GM12878 (cell line): ENCODE measurements at regions of chr10 and their contacts with region 1.

Region 1: DNA sequence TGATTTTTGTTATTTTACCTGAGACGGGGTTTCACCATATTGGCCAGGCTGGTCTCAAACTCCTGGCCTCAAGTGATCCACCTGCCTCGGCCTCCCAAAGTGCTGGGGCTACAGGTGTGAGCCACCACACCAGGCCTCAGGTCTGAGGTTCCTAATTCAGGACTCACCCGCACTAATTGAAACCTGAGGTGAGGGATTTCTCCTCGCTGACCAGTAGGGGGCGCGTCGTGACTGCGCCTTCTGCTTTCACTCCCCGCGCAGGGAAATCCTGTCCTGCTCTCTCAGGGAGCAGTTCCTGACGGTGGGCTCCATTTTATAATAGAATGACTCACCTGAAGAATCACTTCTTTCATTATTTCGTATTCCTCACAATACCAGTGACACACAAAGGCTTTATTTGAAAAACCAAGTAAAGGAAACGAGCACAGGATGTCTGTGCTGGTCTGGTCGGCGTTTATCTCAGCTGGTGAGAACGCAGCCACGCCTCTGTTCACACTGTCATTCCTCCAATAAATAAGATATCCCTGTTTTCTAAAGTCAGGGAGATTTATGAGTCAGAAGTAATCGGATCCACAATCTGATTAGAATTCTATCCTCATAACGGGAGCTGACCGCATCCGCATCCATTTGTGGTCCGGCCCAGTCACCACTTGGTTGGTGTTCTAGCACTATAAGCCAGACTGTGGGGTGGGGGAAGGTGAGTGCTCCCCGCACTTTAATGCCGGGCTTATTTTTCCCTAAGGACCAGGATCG is 35.4 kb downstream of the BAG3 start:
- DNase-seq: no peak
- ATAC-seq: peak; percentile 87
- H3K4me3 ChIP-seq: no peak overlapping the region
- H3K27ac ChIP-seq: no peak overlapping the region
- H3K4me1 ChIP-seq: no peaks in the 10 kb centered on the region
- H3K27me3 ChIP-seq: no peaks in the 10 kb centered on the region
- CTCF ChIP-seq: peak; percentile 84 to 92 (median 86)
- EP300 ChIP-seq: no peak
- POLR2A ChIP-seq: no peak
- RAD21 ChIP-seq: peak; percentile 96

Region 2: DNA sequence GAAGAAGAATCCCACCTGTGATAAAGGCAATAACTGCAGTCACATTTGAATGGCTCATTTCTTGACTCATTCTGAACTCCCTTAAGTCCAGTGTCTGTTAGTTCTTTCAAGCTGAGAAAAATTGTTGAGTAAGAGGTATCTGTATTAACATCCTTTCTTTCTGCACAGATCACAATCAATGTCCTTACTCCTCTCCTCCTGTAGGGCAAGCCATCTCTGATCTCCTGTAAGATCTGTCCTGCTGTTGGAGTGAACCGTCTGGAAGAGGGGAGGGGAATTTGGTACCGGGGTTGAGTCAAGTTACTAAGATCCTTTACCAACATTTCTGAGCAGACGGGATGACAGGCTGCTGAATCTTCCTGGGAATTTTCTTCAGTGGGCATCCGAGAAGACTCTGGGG is 124.5 kb before region 1 on chr10:
- CTCF ChIA-PET with region 1: no interaction called
- POLR2A ChIA-PET with region 1: no interaction called
- RAD21 ChIA-PET with region 1: no interaction called
- SMC1A ChIA-PET with region 1: no interaction called
- in situ Hi-C with region 1: no loop called
- intact Hi-C with region 1: no loop called
- DNase-seq: no peak
- ATAC-seq: no peak
- H3K4me3 ChIP-seq: no peak overlapping the region
- H3K27ac ChIP-seq: no peak overlapping the region
- H3K4me1 ChIP-seq: no peaks in the 10 kb centered on the region
- H3K27me3 ChIP-seq: no peaks in the 10 kb centered on the region
- CTCF ChIP-seq: no peak
- EP300 ChIP-seq: no peak
- POLR2A ChIP-seq: no peak
- RAD21 ChIP-seq: no peak

Region 3: GRCh38 chr10:119616882-119617570 is 69.6 kb before region 1 on chr10:
- CTCF ChIA-PET with region 1: no interaction called
- POLR2A ChIA-PET with region 1: no interaction called
- RAD21 ChIA-PET with region 1: no interaction called
- SMC1A ChIA-PET with region 1: no interaction called
- in situ Hi-C with region 1: no loop called
- intact Hi-C with region 1: no loop called
- DNase-seq: no peak
- ATAC-seq: peak; percentile 61
- H3K4me3 ChIP-seq: no peak overlapping the region
- H3K27ac ChIP-seq: no peak overlapping the region
- H3K4me1 ChIP-seq: no peaks in the 10 kb centered on the region
- H3K27me3 ChIP-seq: no peaks in the 10 kb centered on the region
- CTCF ChIP-seq: no peak; a peak in 1 of 6 replicates
- EP300 ChIP-seq: no peak
- POLR2A ChIP-seq: no peak
- RAD21 ChIP-seq: no peak

Region 4: GRCh38 chr10:119715628-119716505 is 29.3 kb after region 1 on chr10:
- CTCF ChIA-PET with region 1: interaction called, 13 read pairs
- POLR2A ChIA-PET with region 1: no interaction called
- RAD21 ChIA-PET with region 1: interaction called, 7 read pairs
- SMC1A ChIA-PET with region 1: interaction called, 12 read pairs
- in situ Hi-C with region 1: no loop called
- intact Hi-C with region 1: no loop called
- DNase-seq: no peak
- ATAC-seq: no peak
- H3K4me3 ChIP-seq: no peak overlapping the region
- H3K27ac ChIP-seq: no peak overlapping the region
- H3K4me1 ChIP-seq: no peaks in the 10 kb centered on the region
- H3K27me3 ChIP-seq: no peaks in the 10 kb centered on the region
- CTCF ChIP-seq: no peak
- EP300 ChIP-seq: no peak
- POLR2A ChIP-seq: no peak
- RAD21 ChIP-seq: no peak

Region 5: DNA sequence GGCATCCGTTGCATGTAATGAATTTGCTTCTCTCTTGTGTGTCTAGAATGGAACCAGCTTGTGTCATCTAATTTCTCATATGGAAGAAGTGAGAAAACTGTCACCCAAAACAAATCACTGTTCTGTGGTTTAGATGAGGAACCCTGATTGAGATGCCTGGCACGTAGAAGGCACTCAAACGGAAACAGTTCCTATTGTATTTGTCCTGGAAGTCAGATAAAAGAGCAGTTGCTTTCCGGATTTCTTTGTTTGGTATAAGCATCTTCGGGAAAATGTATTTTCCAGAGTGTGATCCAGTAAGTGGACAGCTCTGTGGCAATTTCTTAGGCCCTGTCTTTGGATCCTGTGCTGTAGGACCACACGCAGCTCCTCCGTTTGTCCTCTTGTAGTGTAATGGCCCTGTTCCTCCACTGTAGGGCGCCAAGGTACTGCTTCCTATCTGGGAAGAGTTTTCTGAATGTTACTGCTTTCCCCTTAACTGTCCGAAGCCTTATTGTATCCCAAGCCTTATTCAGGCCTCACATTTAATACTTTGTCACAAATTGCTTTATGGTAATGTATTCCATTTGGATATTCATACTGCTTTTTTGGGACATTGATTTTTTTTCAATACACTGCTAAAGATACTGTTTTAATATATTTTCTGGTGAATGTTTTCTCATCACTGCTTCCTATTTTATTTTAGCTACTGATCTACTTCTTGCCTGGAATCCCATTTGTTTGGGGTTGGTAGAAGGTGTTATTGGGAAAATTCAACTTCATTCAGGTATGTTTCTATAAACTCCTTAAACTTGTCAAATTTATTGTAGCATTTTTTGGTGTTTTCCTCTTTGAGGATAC is 64.0 kb after region 1 on chr10:
- CTCF ChIA-PET with region 1: interaction called, 225 read pairs
- POLR2A ChIA-PET with region 1: interaction called, 6 read pairs
- RAD21 ChIA-PET with region 1: interaction called, 60 read pairs
- SMC1A ChIA-PET with region 1: interaction called, 172 read pairs
- in situ Hi-C with region 1: no loop called
- intact Hi-C with region 1: loop called (anchors 1 kb)
- DNase-seq: peak; percentile 36
- ATAC-seq: peak; percentile 95
- H3K4me3 ChIP-seq: no peak overlapping the region
- H3K27ac ChIP-seq: no peak overlapping the region
- H3K4me1 ChIP-seq: no peaks in the 10 kb centered on the region
- H3K27me3 ChIP-seq: no peaks in the 10 kb centered on the region
- CTCF ChIP-seq: peak; percentile 93
- EP300 ChIP-seq: no peak; a peak in 1 of 4 replicates
- POLR2A ChIP-seq: no peak
- RAD21 ChIP-seq: peak; percentile 99

Region 6: DNA sequence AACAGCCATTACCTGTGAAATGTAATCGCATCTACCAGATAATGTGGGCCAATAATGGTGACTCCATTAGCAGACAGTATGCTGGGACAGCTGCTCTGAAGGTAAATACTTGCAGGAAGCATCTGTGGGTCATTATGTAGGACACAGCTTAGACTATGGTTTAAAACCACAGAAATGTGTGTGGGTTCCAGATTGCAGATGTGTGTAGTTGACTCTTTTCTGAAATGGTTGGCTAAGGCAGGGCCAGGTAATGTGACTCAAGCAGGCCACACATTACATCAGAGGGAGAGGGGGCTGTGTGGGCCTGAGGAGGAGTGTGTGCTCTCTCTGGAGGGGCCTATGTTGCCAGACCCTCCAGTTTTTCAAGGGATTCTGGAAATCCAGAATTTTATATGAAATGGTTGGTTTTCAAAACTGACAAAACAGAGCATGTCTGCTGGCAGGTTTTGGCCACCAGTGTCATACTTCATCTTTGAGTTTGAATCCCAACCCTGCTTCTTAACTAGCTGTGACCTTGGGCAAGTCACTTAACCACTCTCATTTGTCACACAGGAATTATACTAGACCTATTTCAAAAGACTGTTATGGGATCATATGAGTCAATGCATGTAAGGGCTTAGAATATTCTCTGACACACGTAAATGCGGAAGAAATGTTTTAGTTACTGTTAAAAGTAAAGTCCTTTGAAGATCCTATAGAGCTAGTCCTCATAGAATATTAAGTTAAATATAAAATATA is 121.5 kb after region 1 on chr10:
- CTCF ChIA-PET with region 1: interaction called, 13 read pairs
- POLR2A ChIA-PET with region 1: no interaction called
- RAD21 ChIA-PET with region 1: interaction called, 4 read pairs
- SMC1A ChIA-PET with region 1: interaction called, 12 read pairs
- in situ Hi-C with region 1: no loop called
- intact Hi-C with region 1: no loop called
- DNase-seq: no peak
- ATAC-seq: peak; percentile 93
- H3K4me3 ChIP-seq: no peak overlapping the region
- H3K27ac ChIP-seq: no peak overlapping the region
- H3K4me1 ChIP-seq: peaks cover 2% of the 10 kb centered on the region; the same call in 1 of the 2 replicates
- H3K27me3 ChIP-seq: no peaks in the 10 kb centered on the region
- CTCF ChIP-seq: no peak
- EP300 ChIP-seq: no peak
- POLR2A ChIP-seq: no peak
- RAD21 ChIP-seq: no peak

Region 7: DNA sequence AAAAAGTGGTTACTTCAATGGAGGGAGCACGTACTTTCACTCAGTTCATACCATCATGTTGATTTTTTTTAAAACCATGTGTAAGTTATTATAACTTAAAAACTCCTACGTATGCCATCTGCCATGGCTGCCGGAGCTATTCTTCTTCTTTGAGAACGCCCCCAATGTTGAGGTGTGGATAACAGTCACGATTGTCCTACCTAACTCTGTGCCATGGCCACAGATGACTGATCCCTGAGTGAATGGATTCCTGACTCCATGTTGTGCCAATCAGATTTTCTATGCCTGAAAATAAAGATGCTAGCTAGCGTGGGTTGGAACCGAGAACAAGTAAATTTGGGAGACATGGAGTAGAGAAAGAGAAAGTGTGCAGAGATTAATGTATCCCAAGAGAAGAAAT is 180.7 kb after region 1 on chr10:
- CTCF ChIA-PET with region 1: interaction called, 276 read pairs
- POLR2A ChIA-PET with region 1: interaction called, 9 read pairs
- RAD21 ChIA-PET with region 1: interaction called, 144 read pairs
- SMC1A ChIA-PET with region 1: interaction called, 211 read pairs
- in situ Hi-C with region 1: no loop called
- intact Hi-C with region 1: no loop called
- DNase-seq: no peak
- ATAC-seq: no peak
- H3K4me3 ChIP-seq: no peak overlapping the region
- H3K27ac ChIP-seq: no peak overlapping the region
- H3K4me1 ChIP-seq: peaks cover 5% of the 10 kb centered on the region; the same call in 1 of the 2 replicates
- H3K27me3 ChIP-seq: no peaks in the 10 kb centered on the region
- CTCF ChIP-seq: no peak
- EP300 ChIP-seq: no peak
- POLR2A ChIP-seq: no peak
- RAD21 ChIP-seq: no peak

Region 8: GRCh38 chr10:120336911-120337540 is 650.4 kb after region 1 on chr10:
- CTCF ChIA-PET with region 1: interaction called, 17 read pairs
- POLR2A ChIA-PET with region 1: no interaction called
- RAD21 ChIA-PET with region 1: interaction called, 3 read pairs
- SMC1A ChIA-PET with region 1: interaction called, 5 read pairs
- in situ Hi-C with region 1: loop called (anchors 10 kb)
- intact Hi-C with region 1: loop called (anchors 1 kb)
- DNase-seq: no peak
- ATAC-seq: peak; percentile 75
- H3K4me3 ChIP-seq: no peak overlapping the region
- H3K27ac ChIP-seq: no peak overlapping the region
- H3K4me1 ChIP-seq: no peaks in the 10 kb centered on the region
- H3K27me3 ChIP-seq: no peaks in the 10 kb centered on the region
- CTCF ChIP-seq: peak; percentile 77 to 81 (median 78)
- EP300 ChIP-seq: no peak
- POLR2A ChIP-seq: no peak
- RAD21 ChIP-seq: peak; percentile 51